ENCODE measurements at regions of chr3 and their contacts with region 1.

Region 1: GRCh38 chr3:67654099-67654843 is at the start of gene SUCLG2:
- DNase-seq: peak; percentile 87
- H3K4me3 Mint-ChIP-seq: peak within 1 kb of the TSS; percentile 74
- H3K27ac Mint-ChIP-seq: peak within 1 kb of the TSS; percentile 80
- H3K4me1 Mint-ChIP-seq: peaks cover 59% of the 10 kb centered on the region
- H3K27me3 Mint-ChIP-seq: no peaks in the 10 kb centered on the region
- total RNA-seq, gene SUCLG2: 46.9 to 48.5 TPM

Region 2: DNA sequence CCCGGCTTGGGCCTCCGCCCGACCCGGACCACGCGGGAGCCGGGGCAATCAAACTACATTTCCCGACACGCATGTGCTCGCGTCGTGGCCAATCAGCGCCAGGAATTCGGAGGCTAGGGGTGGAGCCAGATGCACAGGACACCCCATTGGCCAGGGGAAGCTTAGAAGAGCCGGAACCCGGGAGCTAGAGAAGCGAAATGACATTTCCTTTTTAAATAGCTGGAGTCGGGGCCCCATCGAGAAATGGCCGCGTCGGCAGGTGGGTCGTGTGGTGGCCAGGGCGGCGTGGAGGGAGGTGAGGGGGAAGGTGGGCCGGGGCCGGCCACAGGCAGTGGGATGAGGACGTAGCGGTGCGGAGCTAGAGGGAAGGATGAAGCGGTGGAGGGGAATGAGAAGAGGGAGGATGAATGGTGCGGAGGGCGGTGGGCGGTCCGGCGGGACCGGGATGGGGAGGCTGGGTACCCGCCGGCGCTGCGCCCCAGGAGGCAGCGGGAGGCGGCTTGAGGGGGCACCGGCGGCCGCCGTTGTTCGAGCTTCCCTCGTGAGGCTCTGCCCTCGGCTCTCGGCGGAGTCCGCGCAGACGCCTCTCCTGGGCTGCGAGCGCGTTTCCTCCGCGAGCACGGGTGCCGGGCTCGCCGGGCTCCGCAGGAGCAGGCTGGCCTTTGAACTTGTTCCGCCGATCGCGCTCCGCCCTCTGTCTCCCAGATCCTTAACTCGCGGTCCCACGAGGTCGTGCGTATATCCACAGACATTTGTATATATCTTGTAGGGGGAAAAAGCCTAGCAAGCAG is 656.0 kb before region 1 on chr3 and contains the start of gene KBTBD8:
- CTCF ChIA-PET with region 1: interaction called, 7 read pairs
- POLR2A ChIA-PET with region 1: interaction called, 13 read pairs
- DNase-seq: peak; percentile 98
- H3K4me3 Mint-ChIP-seq: peak within 1 kb of the TSS; percentile 85
- H3K27ac Mint-ChIP-seq: peak within 1 kb of the TSS; percentile 88
- H3K4me1 Mint-ChIP-seq: peaks cover 42% of the 10 kb centered on the region
- H3K27me3 Mint-ChIP-seq: peaks cover 20% of the 10 kb centered on the region
- total RNA-seq, gene KBTBD8: 14.8 to 16.0 TPM

Region 3: DNA sequence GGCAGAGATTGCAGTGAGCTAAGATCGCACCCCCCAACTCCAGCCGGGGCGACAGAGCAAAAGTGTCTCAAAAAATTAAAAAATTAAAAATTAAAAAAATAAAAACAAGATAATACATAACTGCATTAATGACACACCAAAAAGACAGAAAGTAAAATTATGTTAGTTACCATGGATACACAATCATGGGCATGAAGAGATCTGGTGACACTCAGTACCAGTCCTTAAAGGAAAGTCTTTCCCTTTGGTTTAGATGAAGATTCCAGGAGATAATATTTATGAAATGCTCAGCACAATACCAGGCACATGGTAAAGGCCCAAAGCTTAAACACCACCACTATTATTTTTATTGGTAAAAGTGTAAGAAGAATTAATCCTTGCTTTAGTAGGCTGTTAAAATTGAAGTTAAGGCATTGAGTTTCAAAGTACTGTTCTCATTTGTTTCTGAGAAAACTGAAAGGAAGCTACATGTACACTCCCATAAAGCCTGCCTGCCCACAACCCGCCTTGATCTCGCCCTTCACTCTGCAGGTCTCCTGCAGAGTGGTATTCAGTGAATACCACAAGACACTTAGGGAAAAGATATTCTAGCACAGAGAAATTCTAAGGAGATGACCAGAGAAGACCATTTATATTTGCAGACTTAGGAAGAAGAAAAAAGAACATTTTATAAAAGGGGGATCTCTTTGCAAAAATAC is 52.2 kb before region 1 on chr3:
- CTCF ChIA-PET with region 1: interaction called, 6 read pairs
- POLR2A ChIA-PET with region 1: interaction called, 12 read pairs
- DNase-seq: peak; percentile 23
- H3K4me3 Mint-ChIP-seq: peak overlapping the region; percentile 33
- H3K27ac Mint-ChIP-seq: peak overlapping the region; percentile 75
- H3K4me1 Mint-ChIP-seq: peaks cover 55% of the 10 kb centered on the region
- H3K27me3 Mint-ChIP-seq: no peaks in the 10 kb centered on the region

Region 4: DNA sequence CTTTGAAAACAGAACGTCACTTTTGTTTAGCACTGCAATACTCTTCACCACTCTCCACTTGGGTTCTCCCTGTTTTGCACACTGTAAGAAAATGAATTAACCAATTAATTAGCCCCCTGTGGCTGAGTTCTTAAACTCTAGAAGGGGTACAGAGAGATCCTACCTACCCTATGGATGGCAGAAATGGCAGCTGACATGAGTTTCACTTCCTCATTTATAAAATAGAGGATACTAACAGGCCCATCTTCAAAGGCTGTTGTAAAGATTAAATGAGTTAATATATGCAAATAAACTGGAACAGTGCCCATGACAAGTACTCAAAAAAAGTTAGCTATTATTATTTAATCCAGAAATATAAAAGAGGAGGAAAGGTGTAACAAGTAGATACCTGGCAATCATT is 36.8 kb before region 1 on chr3:
- CTCF ChIA-PET with region 1: no interaction called
- POLR2A ChIA-PET with region 1: no interaction called
- DNase-seq: no peak
- H3K4me3 Mint-ChIP-seq: no peak overlapping the region
- H3K27ac Mint-ChIP-seq: no peak overlapping the region
- H3K4me1 Mint-ChIP-seq: no peaks in the 10 kb centered on the region
- H3K27me3 Mint-ChIP-seq: no peaks in the 10 kb centered on the region

Region 5: GRCh38 chr3:67683522-67683921 is 29.3 kb after region 1 on chr3:
- CTCF ChIA-PET with region 1: interaction called, 3 read pairs
- POLR2A ChIA-PET with region 1: interaction called, 15 read pairs
- DNase-seq: no peak
- H3K4me3 Mint-ChIP-seq: no peak overlapping the region
- H3K27ac Mint-ChIP-seq: no peak overlapping the region
- H3K4me1 Mint-ChIP-seq: peaks cover 32% of the 10 kb centered on the region
- H3K27me3 Mint-ChIP-seq: no peaks in the 10 kb centered on the region

Region 6: GRCh38 chr3:67774676-67775075 is 120.4 kb after region 1 on chr3:
- CTCF ChIA-PET with region 1: no interaction called
- POLR2A ChIA-PET with region 1: no interaction called
- DNase-seq: no peak
- H3K4me3 Mint-ChIP-seq: no peak overlapping the region
- H3K27ac Mint-ChIP-seq: no peak overlapping the region
- H3K4me1 Mint-ChIP-seq: no peaks in the 10 kb centered on the region
- H3K27me3 Mint-ChIP-seq: no peaks in the 10 kb centered on the region